Endothelial cell of umbilical vein (primary cell): ENCODE measurements at regions of chr17 and their contacts with region 1.

Region 1: GRCh38 chr17:75393523-75394331 is 11.8 kb downstream of the GRB2 start:
- DNase-seq: peak; percentile 98
- H3K4me3 ChIP-seq: peak overlapping the region; percentile 73 to 77 (median 76)
- H3K27ac ChIP-seq: peak overlapping the region; percentile 59
- H3K4me1 ChIP-seq: peaks cover 26% of the 10 kb centered on the region
- H3K27me3 ChIP-seq: no peaks in the 10 kb centered on the region
- CTCF ChIP-seq: no peak
- POLR2A ChIP-seq: peak; percentile 93

Region 2: DNA sequence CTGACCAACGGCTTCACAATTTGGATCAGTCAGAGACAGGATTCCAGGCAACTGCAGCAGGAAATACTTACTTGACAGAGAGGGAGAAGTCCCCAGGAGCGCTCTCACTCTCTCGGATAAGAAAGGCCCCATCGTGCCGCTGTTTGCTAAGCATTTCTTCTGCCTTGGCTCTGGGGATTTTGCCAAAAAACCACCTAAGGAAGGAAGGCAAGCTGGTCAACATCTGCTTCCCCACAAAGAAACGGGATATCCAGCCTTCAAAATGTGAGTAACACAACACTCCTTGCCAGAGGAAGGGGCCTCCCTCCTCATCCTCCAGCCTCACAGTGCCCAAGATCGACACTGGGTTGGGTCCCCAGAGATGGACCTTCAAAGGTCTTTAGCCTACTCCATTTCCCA is 67.9 kb before region 1 on chr17:
- CTCF ChIA-PET with region 1: interaction called, 71 read pairs
- POLR2A ChIA-PET with region 1: interaction called, 11 read pairs
- dilution Hi-C with region 1: no loop called
- intact Hi-C with region 1: no loop called
- DNase-seq: peak; percentile 89
- H3K4me3 ChIP-seq: peak overlapping the region in 1 of 3 experiments; percentile 13
- H3K27ac ChIP-seq: peak overlapping the region; percentile 79
- H3K4me1 ChIP-seq: peaks cover 24% of the 10 kb centered on the region
- H3K27me3 ChIP-seq: no peaks in the 10 kb centered on the region
- CTCF ChIP-seq: no peak
- POLR2A ChIP-seq: no peak

Region 3: GRCh38 chr17:75338335-75338734 is 55.4 kb before region 1 on chr17:
- CTCF ChIA-PET with region 1: no interaction called
- POLR2A ChIA-PET with region 1: no interaction called
- dilution Hi-C with region 1: no loop called
- intact Hi-C with region 1: no loop called
- DNase-seq: no peak
- H3K4me3 ChIP-seq: no peak overlapping the region
- H3K27ac ChIP-seq: no peak overlapping the region
- H3K4me1 ChIP-seq: no peaks in the 10 kb centered on the region
- H3K27me3 ChIP-seq: no peaks in the 10 kb centered on the region
- CTCF ChIP-seq: no peak
- POLR2A ChIP-seq: no peak

Region 4: DNA sequence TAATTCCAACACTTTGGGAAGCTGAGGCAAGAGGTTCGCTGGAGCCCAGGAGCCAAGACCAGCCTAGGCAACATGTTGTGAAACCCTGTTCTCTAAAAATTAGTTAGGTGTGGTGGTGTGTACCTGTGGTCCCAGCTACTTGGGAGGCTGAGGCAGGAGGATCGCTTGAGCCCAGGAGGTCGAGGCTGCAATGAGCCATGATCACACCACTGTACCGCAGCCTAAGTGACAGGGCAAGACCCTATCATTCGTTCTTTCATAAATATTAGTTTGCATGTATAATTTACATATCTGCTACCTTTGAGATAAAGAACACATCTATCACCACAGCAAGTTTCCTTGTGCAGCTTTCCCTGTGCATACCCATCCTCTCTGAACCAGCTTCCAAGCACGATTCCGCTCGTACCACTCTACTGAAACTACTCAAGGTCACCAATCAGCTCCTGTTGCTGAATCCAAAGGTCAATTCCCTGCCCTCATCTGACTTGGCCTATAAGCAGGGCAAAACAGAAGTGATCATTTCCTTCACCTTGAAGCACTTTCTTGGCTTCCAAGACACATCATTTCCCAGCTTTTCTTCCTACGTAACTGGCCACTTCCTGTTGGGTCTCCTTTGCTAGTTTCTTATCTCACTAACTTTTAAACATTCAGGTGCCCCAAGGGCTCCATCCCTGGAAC is 37.3 kb before region 1 on chr17:
- CTCF ChIA-PET with region 1: no interaction called
- POLR2A ChIA-PET with region 1: no interaction called
- dilution Hi-C with region 1: no loop called
- intact Hi-C with region 1: no loop called
- DNase-seq: peak; percentile 19
- H3K4me3 ChIP-seq: no peak overlapping the region
- H3K27ac ChIP-seq: no peak overlapping the region
- H3K4me1 ChIP-seq: peaks cover 13% of the 10 kb centered on the region
- H3K27me3 ChIP-seq: no peaks in the 10 kb centered on the region
- CTCF ChIP-seq: no peak
- POLR2A ChIP-seq: no peak

Region 5: GRCh38 chr17:75380315-75380714 is 13.4 kb before region 1 on chr17:
- CTCF ChIA-PET with region 1: interaction called, 14 read pairs
- POLR2A ChIA-PET with region 1: no interaction called
- dilution Hi-C with region 1: no loop called
- intact Hi-C with region 1: no loop called
- DNase-seq: no peak
- H3K4me3 ChIP-seq: no peak overlapping the region
- H3K27ac ChIP-seq: no peak overlapping the region
- H3K4me1 ChIP-seq: no peaks in the 10 kb centered on the region
- H3K27me3 ChIP-seq: no peaks in the 10 kb centered on the region
- CTCF ChIP-seq: no peak
- POLR2A ChIP-seq: no peak

Region 6: GRCh38 chr17:75405365-75406221 is 11.9 kb after region 1 on chr17 and contains the start of gene GRB2:
- CTCF ChIA-PET with region 1: interaction called, 22 read pairs
- POLR2A ChIA-PET with region 1: interaction called, 5 read pairs
- dilution Hi-C with region 1: no loop called
- intact Hi-C with region 1: loop called (anchors 1 kb)
- DNase-seq: peak; percentile 97
- H3K4me3 ChIP-seq: peak within 1 kb of the TSS; percentile 78 to 97 (median 96)
- H3K27ac ChIP-seq: peak within 1 kb of the TSS; percentile 54
- H3K4me1 ChIP-seq: peaks cover 12% of the 10 kb centered on the region
- H3K27me3 ChIP-seq: peaks cover 2% of the 10 kb centered on the region in 2 experiments
- CTCF ChIP-seq: no peak
- POLR2A ChIP-seq: peak; percentile 90
- total RNA-seq, gene GRB2: 93.9 and 94.8 TPM in 2 replicates

Region 7: DNA sequence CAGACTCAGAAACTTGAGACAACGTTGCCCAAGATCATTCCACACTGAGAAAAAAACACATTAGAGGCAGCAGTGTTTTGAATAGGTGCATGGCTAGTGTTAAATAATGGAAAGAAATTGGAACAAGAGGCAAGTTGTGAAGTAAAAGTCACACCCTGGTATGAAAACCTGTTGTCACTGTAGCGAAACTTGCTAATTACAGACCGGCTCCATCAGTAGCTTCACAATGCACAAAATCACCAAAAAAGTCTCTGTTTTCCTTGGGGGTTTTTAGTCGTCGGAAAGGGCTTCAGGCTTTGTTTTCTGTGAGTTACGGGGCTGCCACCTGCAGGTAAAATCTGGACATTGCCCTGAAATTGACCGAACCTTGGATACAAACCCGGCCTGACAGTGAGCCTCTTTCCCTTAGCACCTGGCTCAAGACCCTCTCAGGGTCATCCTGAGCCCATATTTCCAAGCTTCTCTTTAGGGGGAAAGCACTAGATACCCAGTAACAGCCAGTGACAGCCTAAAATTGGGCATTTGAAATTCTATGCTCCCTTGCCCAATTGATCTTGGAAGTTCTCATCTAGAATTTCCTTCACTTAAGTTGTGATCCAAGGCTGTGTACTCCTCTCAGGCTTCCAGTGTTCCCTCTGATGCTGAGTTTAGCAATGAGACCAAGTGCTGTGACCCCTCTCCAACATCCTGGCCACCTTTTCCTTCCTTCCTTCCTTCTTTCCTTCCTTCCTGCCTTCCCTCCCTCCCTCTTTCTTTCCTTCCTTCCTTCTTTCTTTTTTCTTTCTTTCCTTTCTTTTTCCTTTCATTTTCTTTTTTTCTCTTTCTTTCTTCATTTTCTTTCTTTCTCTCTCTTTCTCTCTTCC is 19.0 kb after region 1 on chr17:
- CTCF ChIA-PET with region 1: interaction called, 13 read pairs
- POLR2A ChIA-PET with region 1: no interaction called
- dilution Hi-C with region 1: no loop called
- intact Hi-C with region 1: no loop called
- DNase-seq: peak; percentile 74
- H3K4me3 ChIP-seq: peak overlapping the region in 1 of 3 experiments; percentile 27
- H3K27ac ChIP-seq: no peak overlapping the region
- H3K4me1 ChIP-seq: peaks cover 5% of the 10 kb centered on the region
- H3K27me3 ChIP-seq: peaks cover 2 to 3% of the 10 kb centered on the region in 2 experiments
- CTCF ChIP-seq: peak; percentile 72 to 77
- POLR2A ChIP-seq: no peak

Region 8: DNA sequence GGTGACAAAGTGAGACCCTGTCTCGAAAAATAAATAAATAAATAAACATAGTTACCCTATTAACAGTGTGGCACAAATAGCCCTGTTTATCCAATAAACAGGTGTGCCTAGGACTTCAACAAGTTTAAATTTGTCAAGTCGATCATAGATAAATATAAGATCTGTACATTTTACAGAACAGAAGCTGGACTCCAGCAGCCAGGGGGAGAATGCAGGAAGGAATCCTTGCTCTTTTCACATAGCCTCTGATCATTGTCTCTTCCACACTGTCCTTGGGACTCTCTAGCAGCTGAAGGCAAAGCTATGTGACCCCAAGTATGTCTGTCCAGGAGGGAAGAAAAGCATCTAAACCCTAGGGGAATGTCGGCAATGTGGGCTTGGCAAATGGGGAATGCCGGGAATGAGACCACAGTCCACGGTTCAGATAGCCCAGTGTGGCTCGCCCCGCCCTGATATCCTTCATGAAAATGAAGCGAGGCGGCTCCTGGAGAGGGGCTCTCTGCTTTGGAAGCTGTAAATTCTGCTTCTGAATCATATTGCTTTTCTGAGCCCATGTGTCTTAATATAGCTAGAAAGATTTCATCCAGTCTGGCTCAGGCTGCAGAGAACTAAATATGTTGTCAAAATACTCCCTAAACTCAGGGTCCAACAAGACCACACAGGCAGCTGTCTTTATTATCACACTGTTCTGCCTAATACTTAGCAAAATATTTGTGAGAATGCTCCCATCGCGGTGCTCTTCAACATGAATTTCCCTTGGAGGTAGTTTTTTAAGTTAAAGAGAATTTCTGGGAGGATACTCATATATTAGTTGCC is 36.6 kb after region 1 on chr17:
- CTCF ChIA-PET with region 1: no interaction called
- POLR2A ChIA-PET with region 1: no interaction called
- dilution Hi-C with region 1: no loop called
- intact Hi-C with region 1: no loop called
- DNase-seq: no peak
- H3K4me3 ChIP-seq: no peak overlapping the region
- H3K27ac ChIP-seq: no peak overlapping the region
- H3K4me1 ChIP-seq: peaks cover 3% of the 10 kb centered on the region
- H3K27me3 ChIP-seq: peaks cover 3 to 6% of the 10 kb centered on the region in 2 experiments
- CTCF ChIP-seq: no peak
- POLR2A ChIP-seq: no peak

Region 9: DNA sequence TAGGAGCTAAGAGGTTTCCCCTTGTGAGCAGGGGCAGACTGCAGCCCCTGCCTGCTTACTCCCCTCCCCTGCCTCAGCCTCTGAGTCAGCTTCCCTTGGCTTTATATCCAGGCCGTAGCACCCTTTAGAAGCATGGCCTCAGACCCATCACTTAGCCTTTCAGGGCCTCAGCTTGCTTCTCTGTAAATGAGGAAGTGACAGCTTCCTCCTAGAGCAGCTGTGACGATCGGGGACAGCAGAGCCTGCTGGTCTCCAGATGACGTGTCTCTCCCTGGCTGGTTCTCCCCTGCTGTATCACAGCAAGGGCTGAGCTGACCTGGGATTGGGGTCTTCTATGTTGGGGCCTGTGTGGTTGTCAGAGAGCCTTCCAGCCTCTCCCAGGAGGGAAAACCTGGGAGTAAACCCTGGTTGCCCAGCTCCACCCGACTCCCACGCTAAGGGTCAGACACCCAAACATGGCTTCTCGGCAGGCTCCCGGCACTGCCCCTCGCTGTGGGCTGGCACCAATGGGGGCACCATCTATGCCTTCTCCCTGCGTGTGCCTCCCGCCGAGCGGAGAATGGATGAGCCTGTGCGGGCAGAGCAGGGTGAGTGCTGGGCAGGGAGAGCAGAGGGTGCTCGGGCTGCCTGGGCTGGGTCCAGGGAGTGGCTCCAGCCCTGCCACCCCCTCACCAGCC is 177.6 kb after region 1 on chr17:
- CTCF ChIA-PET with region 1: no interaction called
- POLR2A ChIA-PET with region 1: no interaction called
- dilution Hi-C with region 1: no loop called
- intact Hi-C with region 1: no loop called
- DNase-seq: peak; percentile 21
- H3K4me3 ChIP-seq: no peak overlapping the region
- H3K27ac ChIP-seq: peak overlapping the region; percentile 60
- H3K4me1 ChIP-seq: peaks cover 9% of the 10 kb centered on the region
- H3K27me3 ChIP-seq: no peaks in the 10 kb centered on the region
- CTCF ChIP-seq: no peak
- POLR2A ChIP-seq: no peak